ENCODE measurements at regions of chr7 and their contacts with region 1.

Region 1: DNA sequence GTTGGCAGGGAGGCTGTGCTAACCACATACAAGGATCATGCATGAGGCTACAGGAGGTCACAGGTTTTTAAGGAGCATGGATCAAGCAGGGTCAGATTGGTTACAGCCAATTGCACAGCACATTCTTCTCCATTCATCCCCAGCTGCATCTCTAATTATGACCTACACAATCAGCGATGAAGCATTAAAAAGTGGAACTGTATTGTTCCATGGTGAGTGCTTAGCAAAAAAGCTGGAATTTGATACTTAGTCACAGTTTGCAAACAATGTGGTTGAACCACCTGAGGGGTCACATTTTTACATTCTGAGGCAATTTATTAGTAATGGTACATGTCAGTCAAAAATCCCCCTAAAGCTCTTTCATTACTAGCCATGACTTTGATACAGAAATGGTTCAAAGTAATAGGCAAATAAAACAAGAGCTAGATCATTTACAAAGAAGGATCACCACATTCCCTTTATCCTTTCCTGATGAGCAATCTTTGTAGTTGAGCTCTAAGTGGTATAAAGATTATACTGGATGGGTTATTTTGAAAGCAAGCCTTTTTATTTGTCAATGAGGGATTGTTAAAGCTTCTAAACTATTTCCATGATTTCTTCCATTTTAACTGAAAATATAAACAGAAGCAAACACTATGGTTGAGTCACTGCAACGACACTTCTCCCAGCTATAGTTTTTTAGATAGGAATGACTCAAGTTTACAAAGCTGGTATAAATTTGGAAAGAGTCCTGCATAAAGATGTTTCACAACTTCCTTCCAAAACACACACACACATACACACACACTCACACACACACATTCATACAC is 217.8 kb upstream of the SEMA3A start:
- DNase-seq: peak; percentile 99
- ATAC-seq: peak; percentile 94
- H3K4me3 ChIP-seq: no peak overlapping the region
- H3K27ac ChIP-seq: peak overlapping the region; percentile 75
- H3K4me1 ChIP-seq: 0 out of 2 replicates have a peak, but pooled peaks cover 5% of the 10 kb centered on the region
- H3K27me3 ChIP-seq: no peaks in the 10 kb centered on the region
- CTCF ChIP-seq: no peak

Region 2: DNA sequence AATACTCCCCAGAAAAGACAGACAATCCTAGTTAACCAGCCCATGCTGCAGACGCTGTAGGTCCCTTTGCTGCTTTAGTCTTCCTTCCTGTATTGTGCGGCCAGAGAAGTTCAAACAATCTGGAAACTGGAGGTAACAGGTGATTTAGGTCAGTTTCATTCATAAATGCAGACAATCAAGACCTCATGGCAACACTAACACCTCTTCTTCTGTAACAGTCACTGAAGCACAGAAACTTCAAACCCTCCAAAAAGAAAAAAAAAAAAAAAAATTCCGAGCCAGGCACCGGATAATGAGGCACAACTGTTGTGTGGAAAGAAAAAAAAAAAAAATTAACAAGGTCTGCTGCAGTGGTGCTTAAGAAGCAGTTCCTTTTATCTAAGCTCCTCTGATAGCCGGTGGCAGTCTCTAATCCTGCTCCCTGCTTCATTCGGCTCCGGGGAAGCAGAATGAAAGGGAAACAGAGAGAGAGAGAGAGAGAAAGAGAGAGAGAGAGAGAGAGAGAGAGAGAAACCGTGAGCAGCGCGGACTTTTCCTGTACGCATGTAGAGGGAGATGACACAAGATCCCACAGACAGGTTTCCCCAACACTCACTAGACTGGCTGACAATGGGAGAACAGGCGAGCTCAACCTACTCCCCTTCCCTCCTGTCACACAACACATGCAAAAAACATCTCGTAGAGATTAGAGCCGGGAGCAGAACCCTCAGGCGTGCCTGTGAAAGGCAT is 217.7 kb before region 1 on chr7 and contains the start of gene SEMA3A:
- CTCF ChIA-PET with region 1: interaction called, 5 read pairs
- POLR2A ChIA-PET with region 1: interaction called, 5 read pairs
- in situ Hi-C with region 1: no loop called
- intact Hi-C with region 1: loop called (anchors 10 kb)
- DNase-seq: no peak
- ATAC-seq: peak; percentile 80
- H3K4me3 ChIP-seq: peak within 1 kb of the TSS; percentile 64 to 77
- H3K27ac ChIP-seq: peak within 1 kb of the TSS; percentile 78
- H3K4me1 ChIP-seq: peaks cover 23% of the 10 kb centered on the region
- H3K27me3 ChIP-seq: no peaks in the 10 kb centered on the region
- CTCF ChIP-seq: no peak
- total RNA-seq, gene SEMA3A: 43.3 TPM

Region 3: GRCh38 chr7:84654273-84654672 is 241.9 kb after region 1 on chr7:
- CTCF ChIA-PET with region 1: no interaction called
- POLR2A ChIA-PET with region 1: no interaction called
- in situ Hi-C with region 1: no loop called
- intact Hi-C with region 1: no loop called
- DNase-seq: no peak
- ATAC-seq: no peak
- H3K4me3 ChIP-seq: no peak overlapping the region
- H3K27ac ChIP-seq: no peak overlapping the region
- H3K4me1 ChIP-seq: no peaks in the 10 kb centered on the region
- H3K27me3 ChIP-seq: no peaks in the 10 kb centered on the region
- CTCF ChIP-seq: no peak